Ascending aorta (tissue), 2 donors: ENCODE measurements at regions of chr15 and their contacts with region 1.

Region 1: DNA sequence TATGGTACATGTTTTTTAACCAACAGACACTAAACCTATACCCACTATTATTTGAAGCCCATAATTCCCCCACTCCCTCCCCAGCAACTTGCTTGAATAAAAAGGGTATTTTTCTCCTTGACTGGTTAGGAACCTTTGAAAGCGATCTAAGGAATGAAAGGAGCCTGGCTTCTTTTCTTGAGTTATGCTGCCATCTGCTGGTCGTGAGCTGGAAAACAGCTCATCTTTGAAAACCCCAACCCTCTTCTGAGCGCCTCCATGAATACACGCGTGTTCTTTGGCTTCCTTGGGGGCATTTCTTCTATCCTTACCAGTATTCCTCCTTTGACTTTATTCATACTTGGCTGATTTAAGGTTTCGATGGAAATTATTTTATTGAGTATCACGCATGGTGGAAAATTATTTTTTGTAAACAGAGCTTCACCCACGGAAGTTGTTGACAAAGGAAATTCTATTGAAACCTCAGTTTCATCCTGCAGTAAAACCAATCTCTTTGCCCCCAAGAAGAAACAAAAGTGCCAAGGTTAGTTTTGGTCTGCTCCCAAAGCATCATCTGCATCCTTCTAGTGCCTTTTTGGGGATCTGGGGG is 171.6 kb downstream of the SV2B start:
- DNase-seq: peak in 1 of 2 donors; percentile 76
- H3K4me3 ChIP-seq: no peak overlapping the region
- H3K27ac ChIP-seq: no peak overlapping the region
- H3K4me1 ChIP-seq: no peaks in the 10 kb centered on the region
- H3K27me3 ChIP-seq: no peaks in the 10 kb centered on the region
- CTCF ChIP-seq: peak; percentile 68 to 82 (median 71)

Region 2: DNA sequence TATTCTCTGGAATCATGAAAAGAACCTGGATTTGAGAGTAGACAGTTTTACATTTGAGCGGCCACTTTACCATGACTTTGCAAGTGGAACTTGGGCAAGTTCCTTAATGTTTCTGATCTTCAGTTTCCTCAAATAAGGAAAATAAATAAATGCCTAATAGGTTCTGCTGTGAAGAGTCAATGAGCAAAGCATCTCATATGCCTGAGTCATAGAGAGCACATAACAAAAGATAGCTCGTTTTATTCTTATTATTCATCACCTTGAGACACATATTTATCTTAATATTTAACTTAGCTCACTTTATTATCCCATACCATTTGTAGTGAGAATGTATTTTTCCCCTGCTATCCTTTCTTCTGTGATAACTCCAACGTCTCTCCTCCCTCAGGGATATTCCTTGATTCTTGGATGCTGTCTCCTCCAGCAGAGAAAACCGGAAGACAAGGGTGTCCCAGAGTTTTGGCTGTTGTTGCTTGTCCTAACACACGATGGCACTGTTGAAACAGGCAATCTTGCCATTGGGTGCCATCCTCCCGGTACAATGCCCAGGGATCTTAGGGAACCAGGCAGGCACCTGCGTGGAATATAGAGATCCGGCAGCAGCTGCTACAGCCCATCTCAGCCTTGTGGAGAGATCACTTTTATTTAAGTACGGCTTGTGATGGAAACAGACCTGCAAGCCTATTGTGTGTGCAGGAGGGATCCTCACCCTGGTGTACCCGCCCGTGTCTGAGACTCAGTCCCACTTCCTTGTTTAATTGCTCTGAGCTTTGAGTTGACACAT is 215.9 kb before region 1 on chr15:
- intact Hi-C with region 1: loop called (anchors 1 kb)
- DNase-seq: no peak
- H3K4me3 ChIP-seq: no peak overlapping the region
- H3K27ac ChIP-seq: no peak overlapping the region
- H3K4me1 ChIP-seq: no peaks in the 10 kb centered on the region
- H3K27me3 ChIP-seq: no peaks in the 10 kb centered on the region
- CTCF ChIP-seq: peak; percentile 51 to 70 (median 60)

Region 3: DNA sequence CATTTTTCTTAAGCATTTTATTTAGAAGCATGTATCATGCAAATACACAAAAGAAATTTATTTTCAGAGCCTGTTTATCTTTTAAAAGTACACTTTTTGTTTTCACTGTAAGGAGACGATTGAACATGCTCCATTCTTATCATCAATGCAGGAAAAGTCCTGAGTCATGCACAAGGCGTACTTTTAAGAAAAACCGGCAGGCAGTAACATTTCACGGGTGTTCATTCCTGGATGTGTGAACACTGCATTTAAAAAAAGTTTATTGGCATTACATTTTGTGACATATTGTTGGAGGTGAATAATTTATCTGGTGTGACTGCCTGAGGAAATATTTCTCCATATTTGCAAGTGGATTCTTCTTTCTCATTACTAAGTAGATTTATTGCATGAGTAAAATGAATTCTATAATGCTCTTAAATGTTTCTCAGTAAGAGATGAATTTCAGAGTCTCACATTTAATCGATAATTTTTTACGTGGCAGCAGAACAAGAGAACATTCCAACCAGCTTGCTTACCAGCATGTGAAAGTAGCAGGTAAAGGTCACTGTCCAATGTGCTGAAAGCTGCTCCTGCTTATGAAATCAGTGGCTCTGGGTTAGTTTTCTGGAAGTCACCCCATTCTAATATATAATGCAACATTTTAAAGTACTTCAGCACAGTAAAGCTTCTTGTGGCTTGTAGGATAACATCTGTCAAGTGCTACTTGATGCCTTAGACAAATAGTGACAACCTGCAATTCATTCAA is 84.6 kb before region 1 on chr15:
- intact Hi-C with region 1: no loop called
- DNase-seq: no peak
- H3K4me3 ChIP-seq: no peak overlapping the region
- H3K27ac ChIP-seq: no peak overlapping the region
- H3K4me1 ChIP-seq: no peaks in the 10 kb centered on the region
- H3K27me3 ChIP-seq: no peaks in the 10 kb centered on the region
- CTCF ChIP-seq: no peak

Region 4: GRCh38 chr15:91311986-91312385 is 40.3 kb after region 1 on chr15:
- intact Hi-C with region 1: no loop called
- DNase-seq: no peak
- H3K4me3 ChIP-seq: no peak overlapping the region
- H3K27ac ChIP-seq: no peak overlapping the region
- H3K4me1 ChIP-seq: no peaks in the 10 kb centered on the region
- H3K27me3 ChIP-seq: no peaks in the 10 kb centered on the region
- CTCF ChIP-seq: no peak